ENCODE measurements at regions of chr11 and their contacts with region 1.

Region 1: DNA sequence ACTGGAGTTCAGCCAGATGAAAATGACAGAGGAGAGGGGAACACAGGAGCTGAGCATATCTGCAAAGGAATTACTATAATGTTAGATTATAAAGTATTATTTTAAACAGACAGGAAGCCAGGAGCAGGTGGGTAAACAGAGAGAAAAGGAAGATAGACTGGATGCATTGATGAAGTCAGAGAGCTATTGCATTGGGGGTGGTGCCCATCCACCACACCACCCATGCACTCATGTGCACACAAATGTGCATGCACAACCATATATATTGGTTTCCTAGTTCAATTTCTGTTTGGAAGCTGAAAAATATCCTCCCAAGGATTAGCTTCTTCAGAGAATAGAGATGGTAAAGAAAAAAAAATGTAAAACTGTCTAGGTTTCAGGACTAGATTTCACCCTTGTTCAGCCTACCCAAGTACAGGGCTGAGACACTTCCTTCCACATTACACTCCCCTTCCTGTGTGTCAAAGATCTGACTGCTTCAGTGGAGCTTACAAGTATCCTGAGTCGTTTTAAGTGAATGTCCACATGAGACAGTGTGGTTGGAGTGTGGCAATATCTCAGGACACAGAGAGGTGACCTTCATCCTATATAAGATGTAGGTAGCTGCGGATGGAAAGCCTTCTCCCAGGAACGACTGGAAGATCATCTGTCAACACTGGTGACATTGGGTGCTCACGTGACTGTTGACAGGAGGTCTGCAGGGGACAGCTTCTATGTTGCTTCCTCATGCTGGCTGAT is 12.2 kb upstream of the SMPD1 start:
- DNase-seq: no peak
- ATAC-seq: peak; percentile 18 to 42; a peak in 3 of 6 replicates
- H3K4me3 ChIP-seq: no peak overlapping the region
- H3K27ac ChIP-seq: no peak overlapping the region
- H3K4me1 ChIP-seq: 0 out of 3 replicates have a peak, but pooled peaks cover 7% of the 10 kb centered on the region
- CTCF ChIP-seq: no peak
- EP300 ChIP-seq: no peak
- POLR2A ChIP-seq: no peak
- RAD21 ChIP-seq: no peak

Region 2: GRCh38 chr11:6353367-6353987 is 24.6 kb before region 1 on chr11:
- CTCF ChIA-PET with region 1: interaction called, 20 read pairs
- POLR2A ChIA-PET with region 1: no interaction called
- DNase-seq: peak; percentile 46 to 79
- ATAC-seq: peak; percentile 56 to 86; a peak in 5 of 6 replicates
- H3K4me3 ChIP-seq: no peak overlapping the region
- H3K27ac ChIP-seq: 0 out of 6 replicates have a peak overlapping the region, but pooled peaks of 1 of the 2 experiments have one; percentile 28
- H3K4me1 ChIP-seq: peaks cover 22% of the 10 kb centered on the region
- CTCF ChIP-seq: peak; percentile 96
- EP300 ChIP-seq: no peak
- POLR2A ChIP-seq: no peak
- RAD21 ChIP-seq: peak; percentile 92 to 95

Region 3: DNA sequence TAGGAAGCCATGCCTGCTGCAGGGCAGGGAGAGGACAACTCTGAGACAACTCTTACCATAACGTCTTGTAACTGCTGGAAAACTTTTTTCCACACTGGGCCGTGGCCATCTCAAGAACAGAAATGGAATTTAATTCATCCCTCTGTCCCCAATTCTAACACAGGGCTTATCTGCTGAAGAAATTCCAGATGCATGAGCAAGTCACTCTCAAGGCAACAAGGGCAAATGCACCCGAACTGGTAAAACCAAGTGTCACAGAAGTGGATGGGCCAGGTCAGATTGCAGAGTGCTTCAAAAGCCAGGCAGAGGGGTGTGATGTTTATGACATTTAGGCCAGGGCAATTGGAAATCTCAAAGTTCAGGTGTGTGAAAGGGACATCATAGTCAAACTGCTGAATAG is 19.6 kb after region 1 on chr11:
- CTCF ChIA-PET with region 1: interaction called, 14 read pairs
- POLR2A ChIA-PET with region 1: no interaction called
- DNase-seq: no peak
- ATAC-seq: no peak
- H3K4me3 ChIP-seq: no peak overlapping the region
- H3K27ac ChIP-seq: no peak overlapping the region
- H3K4me1 ChIP-seq: no peaks in the 10 kb centered on the region
- CTCF ChIP-seq: no peak
- EP300 ChIP-seq: no peak
- POLR2A ChIP-seq: no peak
- RAD21 ChIP-seq: no peak

Region 4: GRCh38 chr11:6431861-6432260 is 53.8 kb after region 1 on chr11:
- CTCF ChIA-PET with region 1: interaction called, 13 read pairs
- POLR2A ChIA-PET with region 1: no interaction called
- DNase-seq: peak; percentile 48
- ATAC-seq: peak; percentile 79 to 87
- H3K4me3 ChIP-seq: no peak overlapping the region
- H3K27ac ChIP-seq: peak overlapping the region in 1 of 2 experiments; percentile 9; a peak in 2 of 6 replicates
- H3K4me1 ChIP-seq: peaks cover 18% of the 10 kb centered on the region
- CTCF ChIP-seq: no peak
- EP300 ChIP-seq: no peak
- POLR2A ChIP-seq: no peak
- RAD21 ChIP-seq: no peak

Region 5: GRCh38 chr11:6473481-6474422 is 95.7 kb after region 1 on chr11 and contains the start of gene TRIM3:
- CTCF ChIA-PET with region 1: interaction called, 22 read pairs
- POLR2A ChIA-PET with region 1: interaction called, 3 read pairs
- DNase-seq: peak; percentile 82 to 90
- ATAC-seq: peak; percentile 77 to 89
- H3K4me3 ChIP-seq: peak within 1 kb of the TSS; percentile 92
- H3K27ac ChIP-seq: peak within 1 kb of the TSS; percentile 91 to 92
- H3K4me1 ChIP-seq: peaks cover 31% of the 10 kb centered on the region
- CTCF ChIP-seq: peak; percentile 45
- EP300 ChIP-seq: no peak
- POLR2A ChIP-seq: peak; percentile 46; the same call in 1 of the 2 replicates
- RAD21 ChIP-seq: no peak
- polyA plus RNA-seq, gene TRIM3: 10.0 and 11.3 TPM in 2 replicates

Region 6: GRCh38 chr11:6505577-6506240 is 127.6 kb after region 1 on chr11:
- CTCF ChIA-PET with region 1: interaction called, 140 read pairs
- POLR2A ChIA-PET with region 1: no interaction called
- DNase-seq: peak; percentile 43 to 54
- ATAC-seq: peak; percentile 72 to 87; a peak in 5 of 6 replicates
- H3K4me3 ChIP-seq: no peak overlapping the region
- H3K27ac ChIP-seq: no peak overlapping the region
- H3K4me1 ChIP-seq: no peaks in the 10 kb centered on the region
- CTCF ChIP-seq: peak; percentile 85
- EP300 ChIP-seq: no peak
- POLR2A ChIP-seq: no peak
- RAD21 ChIP-seq: peak; percentile 55 to 60

Region 7: DNA sequence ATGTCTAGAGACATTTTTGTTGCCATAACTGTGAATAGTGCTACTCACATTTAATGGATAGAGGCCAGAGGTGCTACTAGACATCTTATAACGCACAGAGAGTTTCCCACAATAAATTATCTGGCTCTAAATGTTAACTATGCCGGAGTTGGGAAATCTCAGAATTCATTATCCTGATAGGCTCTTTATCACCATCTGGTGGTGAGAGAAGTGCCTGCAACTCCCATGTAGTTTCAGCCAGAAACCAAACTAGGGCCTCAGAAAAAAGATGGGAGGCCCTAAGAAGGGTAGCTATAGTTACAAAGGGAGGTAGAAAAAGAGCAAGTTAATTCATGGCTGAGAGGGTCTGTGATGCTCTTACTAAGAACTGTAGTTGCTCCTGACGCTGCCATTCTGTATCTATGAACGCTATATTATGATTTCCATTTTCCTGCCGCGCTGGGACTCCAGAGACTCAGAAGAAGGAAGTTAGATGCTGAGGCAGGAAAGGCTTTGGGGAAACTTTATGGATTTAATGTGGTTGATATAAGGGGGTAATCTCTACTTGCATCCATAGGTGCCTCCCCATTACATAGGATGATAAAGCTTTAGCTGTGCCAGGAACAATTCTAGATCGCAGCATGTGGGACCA is 327.9 kb after region 1 on chr11:
- CTCF ChIA-PET with region 1: interaction called, 38 read pairs
- POLR2A ChIA-PET with region 1: no interaction called
- DNase-seq: peak; percentile 39 to 45
- ATAC-seq: peak; percentile 68 to 76; a peak in 5 of 6 replicates
- H3K4me3 ChIP-seq: no peak overlapping the region
- H3K27ac ChIP-seq: no peak overlapping the region
- H3K4me1 ChIP-seq: no peaks in the 10 kb centered on the region
- CTCF ChIP-seq: peak; percentile 76
- EP300 ChIP-seq: no peak
- POLR2A ChIP-seq: no peak
- RAD21 ChIP-seq: peak; percentile 60 to 62

Measured in A549 (cell line).